Heart left ventricle (tissue), 16 donors: ENCODE measurements at regions of chr5 and their contacts with region 1.

Region 1: GRCh38 chr5:58849921-58850667 is 267.2 kb downstream of the RAB3C start:
- DNase-seq: no peak
- ATAC-seq: peak in 3 of 4 donors; percentile 50 to 61 (median 57)
- H3K4me3 ChIP-seq: no peak overlapping the region
- H3K27ac ChIP-seq: no peak overlapping the region
- H3K4me1 ChIP-seq: no peaks in the 10 kb centered on the region
- H3K27me3 ChIP-seq: peaks cover 0 to 3% (median 0%) of the 10 kb centered on the region in 9 donors
- CTCF ChIP-seq: peak; percentile 37 to 64 (median 52)
- POLR2A ChIP-seq: no peak

Region 2: GRCh38 chr5:58477760-58478376 is 372.2 kb before region 1 on chr5:
- intact Hi-C with region 1: loop called in 2 of 10 experiments (anchors 2 to 5 kb)
- DNase-seq: no peak
- ATAC-seq: no peak
- H3K4me3 ChIP-seq: no peak overlapping the region
- H3K27ac ChIP-seq: no peak overlapping the region
- H3K4me1 ChIP-seq: no peaks in the 10 kb centered on the region
- H3K27me3 ChIP-seq: peaks cover 0 to 5% (median 0%) of the 10 kb centered on the region in 9 donors
- CTCF ChIP-seq: peak in 7 of 12 donors; percentile 7 to 36 (median 20)
- POLR2A ChIP-seq: no peak

Region 3: GRCh38 chr5:58891096-58891970 is 41.2 kb after region 1 on chr5:
- intact Hi-C with region 1: no loop called
- DNase-seq: peak; percentile 51 to 76 (median 66)
- ATAC-seq: peak; percentile 28 to 63 (median 58)
- H3K4me3 ChIP-seq: peak overlapping the region in 3 of 12 donors; percentile 6 to 28 (median 13)
- H3K27ac ChIP-seq: peak overlapping the region in 10 of 12 donors; percentile 20 to 72 (median 60)
- H3K4me1 ChIP-seq: peaks cover 0 to 34% (median 4%) of the 10 kb centered on the region in 12 donors
- H3K27me3 ChIP-seq: no peaks in the 10 kb centered on the region
- CTCF ChIP-seq: peak; percentile 50 to 83 (median 74)
- POLR2A ChIP-seq: no peak